AG04450 (cell line): ENCODE measurements at regions of chr9 and their contacts with region 1.

Region 1: DNA sequence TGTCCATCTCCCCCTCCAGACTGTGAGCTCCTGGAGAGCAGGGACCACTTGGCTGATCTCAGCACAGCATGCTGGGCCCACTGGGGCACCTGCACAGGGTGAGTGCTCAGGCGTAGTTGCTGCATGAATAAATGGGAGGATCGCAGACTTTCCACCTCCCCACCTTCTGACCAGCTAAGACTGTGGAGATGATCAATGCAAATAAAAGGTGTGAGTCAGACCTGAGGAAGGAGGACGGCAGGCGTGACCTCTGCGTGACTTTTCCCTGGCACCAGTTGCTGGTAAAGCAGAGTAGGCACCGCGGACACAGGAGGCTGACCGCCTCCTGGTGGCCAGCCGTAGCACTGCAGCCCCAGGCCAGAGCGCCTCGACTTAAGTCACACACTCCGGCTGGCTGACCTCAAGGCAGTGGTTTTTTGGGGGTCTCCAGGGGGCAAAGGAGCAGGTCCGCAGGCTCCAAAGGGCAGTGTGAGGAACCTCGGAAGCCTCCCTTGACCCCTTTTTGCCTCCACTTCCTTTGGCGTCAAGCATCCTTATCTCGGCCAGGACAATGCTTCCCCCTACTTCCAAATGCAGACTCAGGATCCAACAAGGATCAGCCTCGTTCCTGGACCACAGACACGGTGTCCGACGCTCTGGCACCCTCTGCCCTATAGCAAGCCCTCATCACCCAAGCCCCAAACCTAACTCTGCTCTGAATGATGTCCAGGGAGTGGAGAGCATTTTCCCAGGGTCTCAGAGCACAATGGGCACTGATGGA is 12.7 kb upstream of the TDRD7 start:
- DNase-seq: peak; percentile 30
- H3K4me3 ChIP-seq: no peak overlapping the region
- H3K27ac ChIP-seq: no peak overlapping the region
- H3K27me3 ChIP-seq: no peaks in the 10 kb centered on the region
- CTCF ChIP-seq: peak; percentile 94

Region 2: DNA sequence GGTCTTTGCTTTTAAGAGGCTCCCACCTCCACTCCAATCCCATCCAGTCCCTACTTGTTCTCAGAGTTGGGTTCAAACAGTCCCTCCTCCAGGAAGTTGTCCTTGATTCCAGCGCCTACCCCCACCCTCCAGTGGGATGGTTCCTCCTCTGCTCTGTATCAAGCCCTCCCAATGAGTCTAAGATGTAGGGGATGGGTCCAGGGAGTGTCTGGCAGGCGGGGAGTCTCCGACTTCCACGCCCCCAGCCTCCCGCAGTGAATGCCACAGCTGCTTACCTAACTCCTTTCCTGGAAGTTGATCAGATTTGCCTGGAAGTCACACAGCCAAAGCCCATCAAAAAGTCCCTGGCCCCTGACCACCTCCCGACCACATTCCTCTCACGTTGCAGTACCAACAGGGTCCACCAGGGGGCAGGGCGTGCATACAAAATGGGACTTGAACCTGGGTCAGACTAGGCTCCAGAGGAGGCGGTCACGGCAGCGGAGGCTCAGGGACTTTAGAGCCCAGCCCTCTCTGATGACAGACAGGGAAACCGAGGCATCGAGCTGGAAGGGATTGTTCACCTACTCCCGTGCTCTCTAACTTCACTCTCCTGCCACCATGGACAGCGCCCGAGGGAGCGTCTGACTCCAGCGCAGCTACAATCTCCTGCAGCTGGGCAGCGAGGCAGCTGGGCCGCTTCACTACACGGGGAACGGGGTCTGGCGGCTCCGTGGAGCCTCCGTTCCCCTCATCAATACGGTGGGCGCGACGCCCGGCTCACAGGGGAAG is 12.3 kb before region 1 on chr9:
- CTCF ChIA-PET with region 1: interaction called, 11 read pairs
- POLR2A ChIA-PET with region 1: no interaction called
- DNase-seq: peak; percentile 24
- H3K4me3 ChIP-seq: no peak overlapping the region
- H3K27ac ChIP-seq: no peak overlapping the region
- H3K27me3 ChIP-seq: peaks cover 3% of the 10 kb centered on the region
- CTCF ChIP-seq: peak; percentile 99

Region 3: GRCh38 chr9:97411789-97412625 is 12.8 kb after region 1 on chr9 and contains the start of gene TDRD7:
- CTCF ChIA-PET with region 1: interaction called, 10 read pairs
- POLR2A ChIA-PET with region 1: no interaction called
- DNase-seq: peak; percentile 42
- H3K4me3 ChIP-seq: peak within 1 kb of the TSS; percentile 72
- H3K27ac ChIP-seq: no peak within 1 kb of the TSS
- H3K27me3 ChIP-seq: peaks cover 10% of the 10 kb centered on the region
- CTCF ChIP-seq: peak; percentile 96
- polyA plus RNA-seq, gene TDRD7: 7.3 and 8.2 TPM in 2 replicates